CD8-positive, alpha-beta T cell (primary cell): ENCODE measurements at regions of chr1 and their contacts with region 1.

Region 1: DNA sequence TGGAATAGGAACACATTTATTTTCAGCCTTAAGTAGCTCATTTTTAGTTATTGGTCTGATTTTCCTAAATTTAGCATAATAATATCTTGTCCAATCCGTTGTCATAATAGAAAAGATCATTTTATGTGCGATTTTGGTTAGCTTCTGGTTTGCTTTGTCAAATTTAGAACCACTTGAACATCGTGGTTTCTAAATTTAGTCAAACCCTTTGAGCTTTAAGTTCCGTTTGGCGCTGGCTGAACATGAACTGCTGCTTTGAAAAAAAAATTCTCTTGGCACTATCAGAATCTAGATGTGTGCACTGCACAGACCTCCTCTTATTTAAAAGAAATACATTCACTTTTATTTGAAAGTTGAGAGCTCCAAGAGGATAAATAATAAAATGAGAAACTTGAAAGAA is 370.6 kb downstream of the PTPRC start:
- DNase-seq: peak in 2 of 9 experiments; percentile 8 to 31
- ATAC-seq: no peak
- H3K4me3 ChIP-seq: no peak overlapping the region
- H3K4me3 Mint-ChIP-seq: peak overlapping the region; percentile 3
- H3K27ac ChIP-seq: no peak overlapping the region
- H3K27ac Mint-ChIP-seq: no peak overlapping the region
- H3K4me1 ChIP-seq: peaks cover 20% of the 10 kb centered on the region
- H3K4me1 Mint-ChIP-seq: peaks cover 22% of the 10 kb centered on the region
- H3K27me3 ChIP-seq: no peaks in the 10 kb centered on the region
- H3K27me3 Mint-ChIP-seq: no peaks in the 10 kb centered on the region
- CTCF ChIP-seq: no peak

Region 2: GRCh38 chr1:198913667-198914066 is 95.8 kb before region 1 on chr1:
- CTCF ChIA-PET with region 1: no interaction called
- POLR2A ChIA-PET with region 1: no interaction called
- intact Hi-C with region 1: loop called in 1 of 2 experiments (anchors 5 kb)
- DNase-seq: no peak
- ATAC-seq: no peak
- H3K4me3 ChIP-seq: no peak overlapping the region
- H3K4me3 Mint-ChIP-seq: no peak overlapping the region
- H3K27ac ChIP-seq: no peak overlapping the region
- H3K27ac Mint-ChIP-seq: no peak overlapping the region
- H3K4me1 ChIP-seq: no peaks in the 10 kb centered on the region
- H3K4me1 Mint-ChIP-seq: peaks cover 40% of the 10 kb centered on the region
- H3K27me3 ChIP-seq: no peaks in the 10 kb centered on the region
- H3K27me3 Mint-ChIP-seq: no peaks in the 10 kb centered on the region
- CTCF ChIP-seq: no peak

Region 3: GRCh38 chr1:199067483-199067882 is 58.0 kb after region 1 on chr1:
- CTCF ChIA-PET with region 1: no interaction called
- POLR2A ChIA-PET with region 1: no interaction called
- intact Hi-C with region 1: no loop called
- DNase-seq: no peak
- ATAC-seq: no peak
- H3K4me3 ChIP-seq: no peak overlapping the region
- H3K4me3 Mint-ChIP-seq: no peak overlapping the region
- H3K27ac ChIP-seq: no peak overlapping the region
- H3K27ac Mint-ChIP-seq: no peak overlapping the region
- H3K4me1 ChIP-seq: no peaks in the 10 kb centered on the region
- H3K4me1 Mint-ChIP-seq: peaks cover 4% of the 10 kb centered on the region
- H3K27me3 ChIP-seq: no peaks in the 10 kb centered on the region
- H3K27me3 Mint-ChIP-seq: no peaks in the 10 kb centered on the region
- CTCF ChIP-seq: no peak